Heart left ventricle (tissue), 16 donors: ENCODE measurements at regions of chr19 and their contacts with region 1.

Region 1: GRCh38 chr19:18985257-18985656 is 44.2 kb upstream of the HOMER3 start:
- DNase-seq: peak in 3 of 5 donors; percentile 33 to 43 (median 41)
- ATAC-seq: peak in 1 of 4 donors; percentile 59
- H3K4me3 ChIP-seq: peak overlapping the region in 1 of 12 donors; percentile 1
- H3K27ac ChIP-seq: peak overlapping the region in 4 of 12 donors; percentile 11 to 63 (median 32)
- H3K4me1 ChIP-seq: peaks cover 0 to 25% (median 1%) of the 10 kb centered on the region in 12 donors
- H3K27me3 ChIP-seq: peaks cover 0 to 8% (median 0%) of the 10 kb centered on the region in 9 donors
- CTCF ChIP-seq: no peak
- POLR2A ChIP-seq: no peak

Region 2: DNA sequence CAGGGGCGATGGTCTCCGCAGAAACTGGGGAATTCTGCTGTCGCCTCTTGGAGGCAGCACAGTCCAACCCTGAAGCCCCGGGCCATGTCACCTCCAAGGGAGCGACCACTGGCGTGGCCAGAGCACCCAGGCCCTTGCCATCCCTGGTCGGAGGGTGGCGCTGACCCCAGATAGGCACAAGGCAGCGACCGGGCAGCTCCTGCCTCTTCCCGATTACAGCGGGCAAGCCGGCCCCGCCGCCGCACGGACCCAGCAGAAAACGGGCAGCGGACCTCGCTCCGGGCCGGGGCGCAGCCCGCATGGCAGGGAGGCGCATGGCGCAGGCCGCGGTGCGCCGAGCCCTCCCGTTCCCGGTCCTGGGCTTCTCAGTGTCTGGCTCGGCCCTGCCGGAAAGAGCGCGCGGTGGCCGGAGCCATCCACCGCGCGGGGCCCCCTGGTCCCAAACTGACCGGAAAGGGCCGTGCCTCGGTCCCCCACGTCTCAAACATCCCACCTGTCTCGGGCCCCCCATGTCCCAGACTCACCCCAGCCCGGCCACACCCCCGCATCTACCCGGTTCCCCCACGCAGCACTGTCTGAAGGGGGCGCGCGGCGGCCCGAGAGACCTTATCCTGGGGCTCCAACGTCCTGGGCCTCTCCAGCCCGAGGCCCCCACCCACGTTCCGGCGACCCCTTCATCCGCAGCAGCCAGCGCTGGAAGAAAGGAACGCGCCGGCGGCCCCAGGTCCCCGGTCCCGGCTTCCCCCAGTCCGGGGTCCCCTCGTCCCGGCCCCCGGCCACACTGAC is 90.0 kb before region 1 on chr19:
- intact Hi-C with region 1: loop called in 2 of 10 experiments (anchors 10 kb)
- DNase-seq: peak in 2 of 5 donors; percentile 46 to 48
- ATAC-seq: peak in 3 of 4 donors; percentile 36 to 55 (median 44)
- H3K4me3 ChIP-seq: peak overlapping the region in 11 of 12 donors; percentile 31 to 64 (median 53)
- H3K27ac ChIP-seq: peak overlapping the region in 2 of 12 donors; percentile 2 to 45
- H3K4me1 ChIP-seq: peaks cover 0 to 33% (median 13%) of the 10 kb centered on the region in 12 donors
- H3K27me3 ChIP-seq: peaks cover 0 to 26% (median 12%) of the 10 kb centered on the region in 9 donors
- CTCF ChIP-seq: peak in 9 of 12 donors; percentile 12 to 51 (median 27)
- POLR2A ChIP-seq: no peak

Region 3: DNA sequence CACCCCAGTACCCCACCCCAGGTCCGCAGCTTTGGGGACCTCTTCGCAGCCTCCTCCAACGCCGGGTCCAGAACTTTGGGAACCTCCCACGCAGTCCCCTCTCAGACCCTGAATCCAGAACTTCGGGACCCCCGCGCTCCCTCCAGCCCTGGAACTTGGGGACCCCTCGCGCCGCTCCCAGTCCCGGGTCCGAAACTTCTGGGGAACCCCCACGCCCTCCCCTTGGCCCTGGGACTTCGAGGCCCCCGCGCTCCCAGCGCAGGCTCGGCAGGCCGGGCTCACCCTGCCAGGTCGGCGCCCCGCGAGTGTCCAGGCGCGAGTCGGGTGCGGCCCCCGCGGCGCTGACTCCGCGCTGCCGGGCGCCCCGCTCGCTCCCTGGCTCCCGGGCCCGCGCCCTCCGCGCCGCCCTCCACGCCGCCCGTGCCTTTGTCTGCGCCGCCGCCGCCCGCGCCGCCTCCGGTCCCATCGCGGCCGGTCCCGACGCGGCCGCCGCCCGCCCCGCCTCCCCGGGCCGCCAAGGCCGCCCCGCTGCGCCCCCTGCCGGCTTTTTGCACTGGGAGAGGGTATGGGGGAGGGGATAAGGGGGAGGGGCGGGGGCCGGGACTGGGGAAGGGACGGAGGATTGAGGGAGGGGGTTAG is 44.4 kb before region 1 on chr19 and contains the start of gene HOMER3:
- intact Hi-C with region 1: loop called in 2 of 10 experiments (anchors 5 kb)
- DNase-seq: peak; percentile 80 to 92 (median 88)
- ATAC-seq: peak; percentile 53 to 91 (median 86)
- H3K4me3 ChIP-seq: peak within 1 kb of the TSS; percentile 56 to 90 (median 76)
- H3K27ac ChIP-seq: peak within 1 kb of the TSS in 10 of 12 donors; percentile 50 to 78 (median 65)
- H3K4me1 ChIP-seq: peaks cover 0 to 23% (median 7%) of the 10 kb centered on the region in 12 donors
- H3K27me3 ChIP-seq: no peaks in the 10 kb centered on the region
- CTCF ChIP-seq: peak in 6 of 12 donors; percentile 29 to 47 (median 32)
- POLR2A ChIP-seq: no peak
- total RNA-seq, gene HOMER3: 13.6 to 36.8 (median 16.4) TPM

Region 4: GRCh38 chr19:19138169-19138981 is 153.1 kb after region 1 on chr19 and contains the start of gene TMEM161A:
- intact Hi-C with region 1: no loop called
- DNase-seq: peak; percentile 97 to 99 (median 99)
- ATAC-seq: peak; percentile 97 to 99 (median 98)
- H3K4me3 ChIP-seq: peak within 1 kb of the TSS; percentile 40 to 90 (median 73)
- H3K27ac ChIP-seq: peak within 1 kb of the TSS in 11 of 12 donors; percentile 52 to 90 (median 74)
- H3K4me1 ChIP-seq: peaks cover 0 to 21% (median 10%) of the 10 kb centered on the region in 12 donors
- H3K27me3 ChIP-seq: no peaks in the 10 kb centered on the region
- CTCF ChIP-seq: no peak
- POLR2A ChIP-seq: peak; percentile 26 to 79
- total RNA-seq, gene TMEM161A: 12.3 to 29.7 (median 20.8) TPM

Region 5: GRCh38 chr19:19259741-19260140 is 274.5 kb after region 1 on chr19:
- intact Hi-C with region 1: no loop called
- DNase-seq: peak in 1 of 5 donors; percentile 4
- ATAC-seq: no peak
- H3K4me3 ChIP-seq: no peak overlapping the region
- H3K27ac ChIP-seq: no peak overlapping the region
- H3K4me1 ChIP-seq: peaks cover 0 to 10% (median 0%) of the 10 kb centered on the region in 12 donors
- H3K27me3 ChIP-seq: peaks cover 8 to 86% (median 43%) of the 10 kb centered on the region in 9 donors
- CTCF ChIP-seq: no peak
- POLR2A ChIP-seq: no peak